Adrenal gland (tissue), 19 donors: ENCODE measurements at regions of chr1 and their contacts with region 1.

Region 1: DNA sequence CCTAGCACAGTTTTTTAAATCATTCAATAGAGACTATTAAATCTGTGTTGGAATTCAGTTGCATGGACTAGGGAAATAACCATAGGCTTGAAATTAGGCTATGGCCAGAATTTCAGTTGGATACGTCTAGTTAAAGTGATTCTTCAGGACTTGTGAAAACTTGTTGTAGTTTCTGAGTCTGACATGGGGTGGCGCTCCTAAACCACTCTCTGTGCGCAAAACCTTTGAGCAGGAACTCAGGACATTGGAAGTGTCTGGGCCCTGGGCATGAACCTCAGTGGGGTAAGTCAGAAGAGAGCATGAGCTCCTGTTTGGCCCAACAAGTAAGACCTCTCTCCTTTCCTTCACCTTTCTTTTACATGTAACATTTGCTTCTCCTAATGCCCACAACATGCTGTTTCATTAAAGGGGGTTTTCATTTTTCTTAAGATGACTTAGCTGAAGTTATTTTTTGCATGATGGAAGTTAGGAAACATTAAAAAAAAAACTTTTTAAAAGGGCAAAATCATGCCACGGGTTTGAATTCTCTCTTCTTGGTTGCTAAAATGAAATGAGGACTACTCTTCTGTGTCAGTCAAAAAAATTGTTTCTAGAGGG is 17.1 kb upstream of the CCDC190 start:
- DNase-seq: peak; percentile 46 to 94 (median 75)
- H3K4me3 ChIP-seq: no peak overlapping the region
- H3K27ac ChIP-seq: no peak overlapping the region
- H3K4me1 ChIP-seq: no peaks in the 10 kb centered on the region
- H3K27me3 ChIP-seq: no peaks in the 10 kb centered on the region
- CTCF ChIP-seq: peak; percentile 35 to 91 (median 84)
- POLR2A ChIP-seq: no peak

Region 2: DNA sequence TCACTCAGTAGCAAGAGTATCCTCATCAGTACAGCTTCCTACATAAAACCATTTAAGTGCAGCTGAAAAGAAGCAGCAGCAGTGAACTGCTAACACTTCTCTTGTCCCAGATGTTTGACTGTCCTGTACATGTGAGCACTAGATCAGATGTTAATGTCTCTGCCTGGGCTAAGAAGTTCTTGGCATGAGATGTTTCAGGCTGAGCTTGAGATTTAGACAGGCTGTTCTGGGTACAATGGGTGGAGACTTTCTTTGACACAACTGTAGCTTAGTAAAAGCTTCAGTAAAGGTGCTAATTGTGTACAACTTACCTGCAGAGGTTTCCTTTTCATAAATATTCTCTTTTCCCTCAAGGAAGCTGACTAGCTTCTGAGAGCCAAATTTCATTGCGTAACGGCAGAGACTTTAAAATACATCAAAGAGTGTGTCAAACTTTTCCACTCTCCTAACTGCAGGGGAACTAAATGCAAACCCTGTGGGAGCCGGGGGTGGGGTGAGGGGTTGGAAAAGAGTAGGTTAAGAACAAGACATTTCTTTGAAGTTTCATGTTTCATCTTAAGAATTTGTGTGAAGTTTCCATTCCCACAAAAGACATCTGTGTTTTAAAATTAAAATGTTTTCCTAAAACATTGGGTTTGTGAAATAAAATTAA is 64.9 kb after region 1 on chr1:
- intact Hi-C with region 1: no loop called
- DNase-seq: peak in 2 of 7 donors; percentile 22 to 26
- H3K4me3 ChIP-seq: no peak overlapping the region
- H3K27ac ChIP-seq: peak overlapping the region in 1 of 5 donors; percentile 31
- H3K4me1 ChIP-seq: peaks cover 10 to 15% of the 10 kb centered on the region in 2 donors
- H3K27me3 ChIP-seq: no peaks in the 10 kb centered on the region
- CTCF ChIP-seq: no peak
- POLR2A ChIP-seq: no peak

Region 3: GRCh38 chr1:163071405-163072255 is 193.5 kb after region 1 on chr1:
- intact Hi-C with region 1: loop called (anchors 5 to 10 kb)
- DNase-seq: peak; percentile 67 to 93 (median 81)
- H3K4me3 ChIP-seq: no peak overlapping the region
- H3K27ac ChIP-seq: no peak overlapping the region
- H3K4me1 ChIP-seq: no peaks in the 10 kb centered on the region
- H3K27me3 ChIP-seq: no peaks in the 10 kb centered on the region
- CTCF ChIP-seq: peak; percentile 60 to 78 (median 73)
- POLR2A ChIP-seq: no peak

Region 4: GRCh38 chr1:163182330-163182949 is 304.3 kb after region 1 on chr1:
- intact Hi-C with region 1: loop called in 1 of 2 experiments (anchors 5 kb)
- DNase-seq: no peak
- H3K4me3 ChIP-seq: no peak overlapping the region
- H3K27ac ChIP-seq: no peak overlapping the region
- H3K4me1 ChIP-seq: no peaks in the 10 kb centered on the region
- H3K27me3 ChIP-seq: no peaks in the 10 kb centered on the region
- CTCF ChIP-seq: no peak
- POLR2A ChIP-seq: no peak